GM12878 (cell line): ENCODE measurements at regions of chr1 and their contacts with region 1.

Region 1: DNA sequence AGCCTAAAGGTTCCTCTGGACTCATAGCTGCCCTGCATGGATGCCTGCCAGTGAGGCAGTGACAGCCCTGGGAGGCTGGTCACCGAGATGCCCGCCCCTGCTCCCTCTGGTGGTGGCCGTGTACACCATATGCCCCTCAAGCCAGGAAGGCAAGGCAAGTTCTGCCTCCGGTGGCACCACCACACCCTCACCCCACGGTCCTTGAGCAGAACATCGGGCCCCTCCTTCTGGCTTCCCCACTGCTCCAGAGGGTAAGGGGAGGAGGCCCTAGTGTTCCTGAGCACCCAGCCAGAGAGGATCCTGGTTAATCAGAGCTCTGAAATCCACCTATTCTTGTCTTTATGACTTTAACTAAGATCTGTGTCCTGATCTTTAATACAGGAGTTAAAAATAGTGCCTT is 1.6 kb upstream of the S100A14 start:
- DNase-seq: no peak
- ATAC-seq: peak; percentile 94
- H3K4me3 ChIP-seq: no peak overlapping the region
- H3K27ac ChIP-seq: no peak overlapping the region
- H3K4me1 ChIP-seq: peaks cover 15% of the 10 kb centered on the region
- H3K27me3 ChIP-seq: no peaks in the 10 kb centered on the region
- CTCF ChIP-seq: peak; percentile 49 to 69 (median 57)
- EP300 ChIP-seq: no peak
- POLR2A ChIP-seq: no peak
- RAD21 ChIP-seq: peak; percentile 36; the same call in 1 of the 2 replicates

Region 2: DNA sequence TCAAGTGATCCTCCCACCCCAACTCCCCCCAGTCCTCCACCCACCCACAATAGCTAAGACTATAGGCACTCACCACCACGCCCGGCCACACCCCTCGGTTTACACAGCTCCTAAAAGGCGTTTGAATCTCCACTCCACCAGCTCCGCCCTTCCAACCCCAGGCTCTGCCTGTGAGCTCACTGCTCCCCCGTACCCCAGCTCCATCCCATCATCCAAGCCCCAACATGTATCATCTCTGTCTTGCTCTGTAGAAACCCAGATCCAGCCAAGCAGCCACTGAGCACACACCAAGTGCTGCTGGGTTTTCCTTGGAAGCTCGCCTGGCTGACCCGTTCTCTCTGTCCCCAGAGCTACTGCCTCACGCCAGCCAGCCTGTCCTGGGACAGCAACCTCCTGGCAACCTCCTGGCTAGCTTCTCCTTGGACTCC is 40.0 kb before region 1 on chr1:
- CTCF ChIA-PET with region 1: interaction called, 106 read pairs
- POLR2A ChIA-PET with region 1: no interaction called
- RAD21 ChIA-PET with region 1: interaction called, 60 read pairs
- SMC1A ChIA-PET with region 1: interaction called, 36 read pairs
- in situ Hi-C with region 1: no loop called
- intact Hi-C with region 1: loop called (anchors 1 kb)
- DNase-seq: no peak
- ATAC-seq: no peak
- H3K4me3 ChIP-seq: no peak overlapping the region
- H3K27ac ChIP-seq: no peak overlapping the region
- H3K4me1 ChIP-seq: peaks cover 5% of the 10 kb centered on the region
- H3K27me3 ChIP-seq: no peaks in the 10 kb centered on the region
- CTCF ChIP-seq: no peak
- EP300 ChIP-seq: no peak
- POLR2A ChIP-seq: no peak
- RAD21 ChIP-seq: no peak

Region 3: GRCh38 chr1:153598309-153599172 is 19.1 kb before region 1 on chr1:
- CTCF ChIA-PET with region 1: interaction called, 18 read pairs
- POLR2A ChIA-PET with region 1: interaction called, 3 read pairs
- RAD21 ChIA-PET with region 1: interaction called, 14 read pairs
- SMC1A ChIA-PET with region 1: interaction called, 12 read pairs
- in situ Hi-C with region 1: no loop called
- intact Hi-C with region 1: no loop called
- DNase-seq: peak; percentile 88
- ATAC-seq: peak; percentile 99
- H3K4me3 ChIP-seq: no peak overlapping the region
- H3K27ac ChIP-seq: peak overlapping the region; percentile 97
- H3K4me1 ChIP-seq: peaks cover 22% of the 10 kb centered on the region
- H3K27me3 ChIP-seq: no peaks in the 10 kb centered on the region
- CTCF ChIP-seq: no peak
- EP300 ChIP-seq: peak; percentile 56 to 64; a peak in 3 of 4 replicates
- POLR2A ChIP-seq: peak; percentile 76
- RAD21 ChIP-seq: 0 out of 2 replicates have a peak, but pooled peaks have one; percentile 13

Region 4: GRCh38 chr1:153606194-153606593 is 11.5 kb before region 1 on chr1:
- CTCF ChIA-PET with region 1: interaction called, 18 read pairs
- POLR2A ChIA-PET with region 1: interaction called, 4 read pairs
- RAD21 ChIA-PET with region 1: interaction called, 9 read pairs
- SMC1A ChIA-PET with region 1: interaction called, 10 read pairs
- in situ Hi-C with region 1: no loop called
- intact Hi-C with region 1: no loop called
- DNase-seq: no peak
- ATAC-seq: no peak
- H3K4me3 ChIP-seq: no peak overlapping the region
- H3K27ac ChIP-seq: no peak overlapping the region
- H3K4me1 ChIP-seq: no peaks in the 10 kb centered on the region
- H3K27me3 ChIP-seq: no peaks in the 10 kb centered on the region
- CTCF ChIP-seq: no peak
- EP300 ChIP-seq: no peak
- POLR2A ChIP-seq: no peak
- RAD21 ChIP-seq: no peak

Region 5: GRCh38 chr1:153633716-153634665 is 16.3 kb after region 1 on chr1 and contains the start of gene CHTOP:
- CTCF ChIA-PET with region 1: interaction called, 66 read pairs
- POLR2A ChIA-PET with region 1: interaction called, 5 read pairs
- RAD21 ChIA-PET with region 1: interaction called, 4 read pairs
- SMC1A ChIA-PET with region 1: interaction called, 10 read pairs
- in situ Hi-C with region 1: no loop called
- intact Hi-C with region 1: no loop called
- DNase-seq: peak; percentile 95
- ATAC-seq: peak; percentile 96
- H3K4me3 ChIP-seq: peak within 1 kb of the TSS; percentile 89
- H3K27ac ChIP-seq: peak within 1 kb of the TSS; percentile 98
- H3K4me1 ChIP-seq: peaks cover 6% of the 10 kb centered on the region
- H3K27me3 ChIP-seq: no peaks in the 10 kb centered on the region
- CTCF ChIP-seq: no peak
- EP300 ChIP-seq: no peak
- POLR2A ChIP-seq: peak; percentile 98
- RAD21 ChIP-seq: no peak
- polyA plus RNA-seq, gene CHTOP: 8.4 to 15.9 TPM

Region 6: DNA sequence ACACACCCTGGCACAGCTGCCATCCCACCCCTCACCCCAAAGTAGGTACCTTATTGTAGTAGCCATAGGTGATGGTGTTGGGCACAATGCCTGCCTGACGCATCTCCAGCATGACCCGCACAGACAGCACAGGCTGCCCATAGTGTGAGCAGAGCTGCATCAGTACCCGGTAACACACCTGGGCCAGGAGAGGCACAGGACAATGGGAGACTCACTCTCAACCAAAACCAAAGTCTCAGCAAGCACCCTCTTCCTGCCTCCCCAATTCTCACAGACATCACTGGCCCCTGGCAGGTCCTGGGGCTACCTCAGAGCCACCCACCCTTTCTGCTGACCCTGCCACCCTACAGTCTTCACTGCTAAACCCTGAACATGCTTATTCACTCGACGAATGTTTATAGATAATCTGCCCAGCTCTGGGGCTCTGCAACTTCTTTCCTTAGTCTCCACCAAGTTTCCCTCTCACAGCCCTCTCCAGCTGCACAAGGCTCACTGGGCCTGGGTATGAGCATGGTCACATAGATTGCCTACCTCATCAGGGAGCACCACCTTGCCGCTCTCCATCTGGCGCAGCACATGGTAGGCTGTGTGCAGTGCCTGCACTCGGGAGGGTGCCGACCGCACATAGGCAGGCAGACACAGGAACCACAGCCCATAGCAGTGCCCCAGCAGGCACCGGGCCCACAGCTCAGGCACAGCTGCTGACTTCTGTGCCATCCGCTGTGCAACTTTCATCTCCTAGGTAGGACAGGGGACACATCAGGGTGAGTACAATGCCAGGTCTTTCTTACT is 318.5 kb after region 1 on chr1:
- CTCF ChIA-PET with region 1: no interaction called
- POLR2A ChIA-PET with region 1: no interaction called
- RAD21 ChIA-PET with region 1: no interaction called
- SMC1A ChIA-PET with region 1: no interaction called
- in situ Hi-C with region 1: no loop called
- intact Hi-C with region 1: no loop called
- DNase-seq: no peak
- ATAC-seq: no peak
- H3K4me3 ChIP-seq: no peak overlapping the region
- H3K27ac ChIP-seq: no peak overlapping the region
- H3K4me1 ChIP-seq: no peaks in the 10 kb centered on the region
- H3K27me3 ChIP-seq: no peaks in the 10 kb centered on the region
- CTCF ChIP-seq: no peak
- EP300 ChIP-seq: no peak
- POLR2A ChIP-seq: peak; percentile 17; the same call in 1 of the 2 replicates
- RAD21 ChIP-seq: no peak